ENCODE measurements at regions of chr1 and their contacts with region 1.

Region 1: DNA sequence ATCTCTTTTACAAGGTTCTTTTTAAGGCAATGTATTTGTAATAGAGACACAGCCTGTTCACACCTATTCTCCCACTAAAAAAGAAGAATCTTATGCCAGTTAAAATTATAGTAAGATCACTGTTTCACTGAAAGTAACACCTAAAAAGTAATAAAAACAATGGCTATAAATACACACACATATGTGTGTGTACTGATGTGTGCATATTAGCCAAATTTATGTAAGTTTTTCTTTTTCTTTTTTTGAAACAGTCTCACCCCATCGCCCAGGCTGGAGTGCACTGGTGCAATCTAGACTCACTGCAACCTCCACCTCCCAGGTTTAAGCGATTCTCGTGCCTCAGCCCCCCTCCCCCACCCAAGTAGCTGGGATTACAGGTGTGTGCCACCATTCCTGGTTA is 56.8 kb upstream of the SLC30A10 start:
- DNase-seq: no peak
- H3K27ac ChIP-seq: no peak overlapping the region
- CTCF ChIP-seq: no peak

Region 2: DNA sequence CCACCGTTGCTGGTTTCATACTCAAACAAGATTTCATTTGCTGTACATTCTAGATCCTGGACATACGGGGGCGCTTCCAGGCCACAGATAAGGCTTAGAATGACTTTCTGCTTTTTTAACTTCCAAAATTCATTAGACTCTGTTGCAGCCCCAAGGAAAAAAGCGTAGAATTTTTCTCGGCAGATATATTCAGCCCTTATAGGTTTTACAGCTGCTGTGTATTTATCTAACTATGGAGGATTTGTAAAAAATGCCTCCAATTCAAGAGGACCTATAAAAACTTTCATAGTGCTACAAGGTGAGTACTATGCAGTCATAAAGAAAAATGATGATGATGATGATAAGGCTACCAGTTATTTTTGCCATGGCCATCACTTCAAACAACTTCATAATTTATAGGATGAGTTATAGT is 108.4 kb before region 1 on chr1:
- CTCF ChIA-PET with region 1: no interaction called
- POLR2A ChIA-PET with region 1: no interaction called
- DNase-seq: peak; percentile 20
- H3K27ac ChIP-seq: no peak overlapping the region
- CTCF ChIP-seq: no peak

Region 3: GRCh38 chr1:220089650-220090556 is 104.7 kb after region 1 on chr1 and contains the start of gene BPNT1:
- CTCF ChIA-PET with region 1: no interaction called
- POLR2A ChIA-PET with region 1: interaction called, 10 read pairs
- DNase-seq: peak; percentile 98
- H3K27ac ChIP-seq: peak within 1 kb of the TSS; percentile 69
- CTCF ChIP-seq: 0 out of 2 replicates have a peak, but pooled peaks have one; percentile 18

Region 4: GRCh38 chr1:220113136-220113695 is 128.0 kb after region 1 on chr1:
- CTCF ChIA-PET with region 1: no interaction called
- POLR2A ChIA-PET with region 1: no interaction called
- DNase-seq: peak; percentile 60
- H3K27ac ChIP-seq: no peak overlapping the region
- CTCF ChIP-seq: peak; percentile 52

Measured in RWPE1 (cell line).